Aorta (tissue), 5 donors: ENCODE measurements at regions of chr11 and their contacts with region 1.

Region 1: GRCh38 chr11:43944761-43945311 is 2.4 kb downstream of the C11orf96 start:
- DNase-seq: peak; percentile 83 to 95
- ATAC-seq: peak; percentile 48
- H3K4me3 ChIP-seq: peak overlapping the region; percentile 35 to 99
- H3K27ac ChIP-seq: peak overlapping the region; percentile 46 to 85
- H3K4me1 ChIP-seq: no peaks in the 10 kb centered on the region
- H3K27me3 ChIP-seq: no peaks in the 10 kb centered on the region

Region 2: DNA sequence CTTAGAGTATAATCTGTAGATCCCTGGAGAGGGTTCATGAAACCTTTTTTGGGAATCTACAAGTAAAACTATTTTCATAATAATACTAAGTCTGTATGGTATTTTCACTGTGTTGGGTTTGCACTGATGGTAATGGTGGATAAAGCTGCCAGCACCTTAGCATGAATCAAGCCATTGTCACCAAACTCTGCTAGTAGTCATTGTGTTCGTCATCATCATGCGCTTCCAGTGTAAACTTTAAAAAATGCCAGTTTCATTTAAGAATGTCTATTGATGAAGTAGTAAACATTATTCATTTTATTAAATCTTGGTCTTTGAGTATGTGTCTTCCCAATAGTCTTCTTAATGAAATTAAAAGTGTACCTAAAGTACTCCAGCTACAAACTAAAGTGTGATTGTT is 49.2 kb before region 1 on chr11:
- intact Hi-C with region 1: loop called (anchors 2 kb)
- DNase-seq: no peak
- ATAC-seq: no peak
- H3K4me3 ChIP-seq: no peak overlapping the region
- H3K27ac ChIP-seq: no peak overlapping the region
- H3K4me1 ChIP-seq: no peaks in the 10 kb centered on the region
- H3K27me3 ChIP-seq: no peaks in the 10 kb centered on the region

Region 3: GRCh38 chr11:43923406-43924111 is 21.3 kb before region 1 on chr11:
- intact Hi-C with region 1: loop called (anchors 2 kb)
- DNase-seq: peak; percentile 80 to 85
- ATAC-seq: peak; percentile 81
- H3K4me3 ChIP-seq: no peak overlapping the region
- H3K27ac ChIP-seq: peak overlapping the region; percentile 93 to 98
- H3K4me1 ChIP-seq: peaks cover 2 to 23% of the 10 kb centered on the region in 2 donors
- H3K27me3 ChIP-seq: no peaks in the 10 kb centered on the region

Region 4: DNA sequence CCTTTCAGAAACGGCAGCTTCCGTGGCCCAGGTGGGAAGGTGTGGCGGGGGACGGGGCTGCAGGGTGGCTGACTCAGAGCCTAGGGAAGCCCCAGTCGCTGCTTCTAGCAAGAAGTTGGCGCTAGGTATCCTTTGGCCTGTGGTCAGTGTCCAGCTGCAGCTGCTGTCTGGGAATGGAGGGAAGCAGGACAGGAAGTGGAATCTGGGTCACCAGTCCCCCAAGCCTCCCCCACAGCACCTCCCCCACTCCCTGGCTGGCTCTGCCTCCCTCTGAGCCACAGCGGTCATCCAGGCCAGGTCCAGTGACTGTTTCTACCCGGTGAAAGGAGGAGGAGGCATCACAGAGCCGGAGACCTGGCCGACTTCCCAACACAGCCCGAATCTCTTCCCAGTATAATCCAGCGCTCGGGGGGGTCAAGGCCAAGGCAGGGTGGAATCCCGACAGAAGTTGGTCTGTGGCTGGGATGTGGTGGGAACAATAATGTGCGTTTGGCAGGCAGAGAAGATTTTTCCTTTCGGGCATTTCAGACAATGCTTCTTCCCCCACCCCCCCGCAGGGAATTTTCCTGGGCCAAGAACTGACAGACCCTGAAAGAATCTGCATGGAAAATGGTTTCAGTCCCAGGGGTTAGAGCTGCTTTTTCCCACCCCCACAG is 42.7 kb after region 1 on chr11:
- intact Hi-C with region 1: loop called (anchors 2 to 5 kb)
- DNase-seq: peak; percentile 96
- ATAC-seq: peak; percentile 88
- H3K4me3 ChIP-seq: no peak overlapping the region
- H3K27ac ChIP-seq: peak overlapping the region; percentile 31 to 70
- H3K4me1 ChIP-seq: no peaks in the 10 kb centered on the region
- H3K27me3 ChIP-seq: no peaks in the 10 kb centered on the region

Region 5: DNA sequence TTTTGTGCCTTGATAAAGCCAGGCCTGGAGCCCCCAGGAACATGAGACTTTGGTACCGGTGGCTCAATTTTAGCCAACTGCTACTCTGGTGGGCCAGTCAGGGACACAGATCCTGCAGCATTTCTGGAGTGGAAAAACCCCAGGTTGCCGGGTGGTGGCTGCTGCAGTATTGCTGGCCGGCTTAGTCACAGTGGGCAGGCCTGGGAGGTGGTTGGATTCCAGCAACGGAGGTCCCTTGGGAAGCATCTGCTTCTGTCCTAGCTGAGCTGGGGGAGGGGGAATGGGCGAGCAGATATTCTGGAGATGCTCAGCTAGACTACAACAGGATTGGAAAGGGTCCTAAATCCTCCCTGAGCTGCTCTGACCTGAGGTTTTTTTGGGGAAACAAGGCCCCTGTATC is 71.3 kb after region 1 on chr11:
- intact Hi-C with region 1: loop called in 1 of 2 experiments (anchors 5 kb)
- DNase-seq: peak; percentile 91 to 93
- ATAC-seq: peak; percentile 84
- H3K4me3 ChIP-seq: no peak overlapping the region
- H3K27ac ChIP-seq: peak overlapping the region; percentile 88 to 91
- H3K4me1 ChIP-seq: peaks cover 3% of the 10 kb centered on the region in 2 donors
- H3K27me3 ChIP-seq: no peaks in the 10 kb centered on the region

Region 6: GRCh38 chr11:44029977-44030911 is 85.4 kb after region 1 on chr11:
- intact Hi-C with region 1: loop called (anchors 2 kb)
- DNase-seq: peak; percentile 83 to 88
- ATAC-seq: peak; percentile 85
- H3K4me3 ChIP-seq: no peak overlapping the region
- H3K27ac ChIP-seq: peak overlapping the region; percentile 98 to 100
- H3K4me1 ChIP-seq: peaks cover 0 to 11% of the 10 kb centered on the region in 2 donors
- H3K27me3 ChIP-seq: no peaks in the 10 kb centered on the region

Region 7: GRCh38 chr11:44036811-44037657 is 92.2 kb after region 1 on chr11:
- intact Hi-C with region 1: loop called (anchors 2 kb)
- DNase-seq: peak; percentile 91 to 93
- ATAC-seq: peak; percentile 95
- H3K4me3 ChIP-seq: no peak overlapping the region
- H3K27ac ChIP-seq: peak overlapping the region in 1 of 2 donors; percentile 54
- H3K4me1 ChIP-seq: peaks cover 5 to 6% of the 10 kb centered on the region in 2 donors
- H3K27me3 ChIP-seq: no peaks in the 10 kb centered on the region